ENCODE measurements at regions of chr15 and their contacts with region 1.

Region 1: GRCh38 chr15:51982013-51982769 is 10.6 kb upstream of the LEO1 start:
- DNase-seq: no peak
- ATAC-seq: peak; percentile 71

Region 2: DNA sequence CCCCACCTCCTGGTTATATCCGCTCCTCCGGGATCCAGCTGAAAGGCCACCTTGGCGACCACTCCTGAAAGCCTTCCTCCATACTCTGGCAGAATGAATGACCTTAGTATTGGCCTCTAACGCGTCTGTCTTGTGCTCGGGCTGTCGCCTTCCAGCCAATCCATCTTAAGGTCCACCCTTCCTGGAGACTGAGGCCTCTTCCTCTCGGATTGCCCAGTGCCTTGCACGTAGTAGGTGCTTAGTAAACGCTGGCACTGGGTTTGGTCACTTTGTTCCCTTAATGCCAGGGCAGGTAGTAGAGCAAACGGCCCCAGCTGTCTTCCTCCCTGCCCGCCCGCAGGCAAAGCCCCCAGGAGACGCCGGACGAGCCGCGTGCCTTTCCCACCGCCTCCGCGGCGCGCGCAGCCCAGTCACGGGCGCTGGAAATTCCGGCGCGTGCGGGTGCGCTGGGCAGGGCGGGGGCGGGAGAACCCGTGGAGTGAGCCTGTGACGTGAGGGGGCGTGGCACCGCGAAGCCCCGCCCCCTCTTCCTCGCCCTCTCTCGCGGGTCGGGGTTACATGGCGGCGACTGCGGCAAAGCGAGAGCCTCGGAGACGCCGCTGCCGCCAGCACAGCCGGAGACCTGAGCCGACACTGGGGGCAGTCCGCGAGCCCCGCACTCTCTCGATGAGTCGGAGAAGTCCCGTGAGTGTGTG is 36.6 kb after region 1 on chr15 and contains the start of gene MAPK6:
- intact Hi-C with region 1: loop called (anchors 2 kb)
- DNase-seq: peak; percentile 97
- ATAC-seq: peak; percentile 97
- total RNA-seq, gene MAPK6: 22.6 TPM

Region 3: DNA sequence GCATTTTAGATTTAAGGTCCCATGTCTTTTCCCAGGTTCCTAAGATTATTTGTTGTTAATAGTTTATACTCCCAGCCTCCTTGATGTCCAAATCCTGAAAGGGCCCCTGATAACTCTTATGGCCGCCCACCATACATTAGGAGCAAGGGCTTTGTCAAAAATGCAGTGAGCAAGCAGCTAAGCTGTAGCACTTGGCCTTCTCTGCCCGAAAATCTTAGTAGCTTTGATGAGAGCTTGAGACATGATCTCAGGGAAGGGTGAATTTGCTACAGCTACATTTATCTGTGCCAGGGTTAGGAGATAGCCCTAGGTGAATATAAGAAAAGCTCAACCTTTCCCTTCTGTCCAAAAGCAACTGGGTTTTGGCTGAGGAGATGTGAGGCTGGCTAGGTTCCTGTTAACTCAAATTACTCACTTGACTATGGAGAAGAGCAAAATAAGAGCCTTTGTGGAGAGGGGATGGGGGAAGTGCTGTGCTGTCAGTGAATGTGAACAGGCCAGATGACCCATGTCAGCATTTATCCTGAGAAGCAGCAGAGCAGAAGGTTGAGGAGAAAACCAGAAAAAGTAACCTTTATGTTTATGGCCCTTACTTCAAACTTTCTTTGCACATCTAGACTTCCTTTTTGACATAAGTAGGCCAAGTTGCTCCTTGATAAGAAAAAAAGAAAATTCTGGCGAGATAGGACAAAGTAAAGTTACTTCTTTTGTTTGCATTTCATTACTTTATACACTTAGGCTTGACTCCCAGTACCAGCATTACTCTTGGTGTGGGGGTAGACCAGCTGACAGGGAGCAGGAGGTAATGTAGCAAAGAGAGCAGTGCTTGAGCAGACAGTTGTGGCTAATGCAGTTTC is 58.0 kb after region 1 on chr15:
- intact Hi-C with region 1: loop called (anchors 10 kb)
- DNase-seq: no peak
- ATAC-seq: peak; percentile 60

Region 4: GRCh38 chr15:52078876-52079700 is 96.9 kb after region 1 on chr15:
- intact Hi-C with region 1: loop called (anchors 2 kb)
- DNase-seq: peak; percentile 85
- ATAC-seq: peak; percentile 76